PC-9 (cell line): ENCODE measurements at regions of chr3 and their contacts with region 1.

Region 1: GRCh38 chr3:126752303-126752842 is 48.3 kb downstream of the CHCHD6 start:
- DNase-seq: peak; percentile 44 to 88
- H3K4me3 ChIP-seq: no peak overlapping the region
- H3K27ac ChIP-seq: no peak overlapping the region
- H3K4me1 ChIP-seq: peaks cover 10% of the 10 kb centered on the region
- H3K27me3 ChIP-seq: no peaks in the 10 kb centered on the region
- CTCF ChIP-seq: peak; percentile 93

Region 2: GRCh38 chr3:126685041-126685440 is 67.3 kb before region 1 on chr3:
- CTCF ChIA-PET with region 1: no interaction called
- POLR2A ChIA-PET with region 1: no interaction called
- intact Hi-C with region 1: no loop called
- DNase-seq: no peak
- H3K4me3 ChIP-seq: no peak overlapping the region
- H3K27ac ChIP-seq: no peak overlapping the region
- H3K4me1 ChIP-seq: no peaks in the 10 kb centered on the region
- H3K27me3 ChIP-seq: no peaks in the 10 kb centered on the region
- CTCF ChIP-seq: no peak

Region 3: DNA sequence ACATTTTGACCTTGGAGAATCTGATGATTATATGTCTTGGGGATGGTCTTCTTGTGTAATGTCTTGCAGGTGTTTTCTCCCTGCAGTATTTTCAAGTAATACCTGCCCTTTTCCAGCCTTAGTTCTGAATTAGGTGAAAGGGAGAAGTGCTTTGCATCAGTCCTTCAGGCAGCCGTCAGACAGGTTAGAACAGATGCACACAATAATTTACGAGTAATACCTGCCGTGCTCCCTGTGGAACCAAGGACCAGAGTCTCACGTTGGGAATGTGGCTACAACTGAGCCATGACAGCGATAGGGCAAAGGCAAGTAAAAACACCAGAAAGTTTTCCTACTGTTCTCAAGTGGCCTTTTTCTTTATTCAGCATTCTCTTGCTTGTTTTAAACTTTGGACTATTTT is 20.8 kb after region 1 on chr3:
- CTCF ChIA-PET with region 1: interaction called, 17 read pairs
- POLR2A ChIA-PET with region 1: no interaction called
- intact Hi-C with region 1: no loop called
- DNase-seq: peak in 1 of 2 experiments; percentile 44
- H3K4me3 ChIP-seq: no peak overlapping the region
- H3K27ac ChIP-seq: peak overlapping the region; percentile 40
- H3K4me1 ChIP-seq: peaks cover 19% of the 10 kb centered on the region
- H3K27me3 ChIP-seq: no peaks in the 10 kb centered on the region
- CTCF ChIP-seq: no peak

Region 4: DNA sequence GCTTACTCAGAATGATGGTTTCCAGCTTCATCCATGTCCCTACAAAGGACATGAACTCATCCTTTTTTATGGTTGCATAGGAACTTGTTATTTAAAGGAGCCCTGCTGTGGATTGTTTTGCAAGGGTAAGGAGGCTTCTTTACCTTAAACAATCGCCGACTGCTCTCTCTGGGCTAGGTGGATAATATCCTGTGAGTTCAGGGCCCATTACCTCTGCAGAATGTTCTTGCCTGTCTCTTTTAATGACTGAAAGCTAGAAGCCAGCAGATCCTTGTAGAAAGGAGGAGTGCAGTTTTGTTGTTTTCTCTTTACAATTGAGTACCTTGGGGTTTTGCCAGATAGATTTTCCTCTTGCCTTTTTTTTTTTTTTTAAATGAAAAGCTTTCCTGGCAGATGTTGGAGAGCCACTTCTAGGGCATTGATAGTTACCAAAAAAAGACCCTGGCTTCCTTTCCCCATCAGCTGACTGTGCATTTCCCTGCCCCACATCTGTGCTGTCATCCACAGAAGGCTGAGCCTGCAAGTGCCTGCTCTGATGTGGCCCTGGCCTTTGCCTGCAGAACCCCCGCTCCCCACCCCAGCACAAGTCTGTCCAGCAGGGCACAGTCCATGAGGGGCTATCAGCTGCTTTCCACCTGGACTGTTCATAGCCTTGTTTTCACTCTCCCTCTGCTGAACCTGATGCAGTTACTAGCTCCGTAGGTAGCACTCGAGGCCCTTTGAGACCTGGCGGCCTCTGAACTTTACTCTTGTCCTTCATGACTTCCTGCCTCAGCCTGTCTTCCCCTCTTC is 64.8 kb after region 1 on chr3:
- CTCF ChIA-PET with region 1: no interaction called
- POLR2A ChIA-PET with region 1: no interaction called
- intact Hi-C with region 1: no loop called
- DNase-seq: no peak
- H3K4me3 ChIP-seq: no peak overlapping the region
- H3K27ac ChIP-seq: no peak overlapping the region
- H3K4me1 ChIP-seq: no peaks in the 10 kb centered on the region
- H3K27me3 ChIP-seq: no peaks in the 10 kb centered on the region
- CTCF ChIP-seq: no peak

Region 5: DNA sequence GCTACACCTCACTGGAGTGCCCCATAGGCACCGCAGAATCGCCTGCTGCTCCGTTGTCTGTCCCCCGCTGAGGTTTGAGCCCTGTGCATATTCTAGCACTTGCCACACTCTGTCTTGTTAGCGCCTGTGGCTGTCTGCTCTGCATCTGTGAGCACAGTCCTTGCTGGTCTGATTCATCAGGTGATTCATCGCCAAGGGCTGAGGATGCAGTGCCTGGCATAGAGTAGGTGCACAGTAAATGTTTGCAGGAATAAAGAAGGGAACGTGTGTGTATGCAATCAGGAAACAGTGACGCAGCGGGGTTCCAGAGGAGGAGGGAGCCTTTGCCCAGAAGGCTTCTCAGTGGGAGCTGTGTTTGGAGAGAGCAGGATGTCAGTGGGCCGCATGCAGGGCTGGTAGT is 106.5 kb after region 1 on chr3:
- CTCF ChIA-PET with region 1: no interaction called
- POLR2A ChIA-PET with region 1: no interaction called
- intact Hi-C with region 1: loop called (anchors 2 kb)
- DNase-seq: peak; percentile 69 to 94
- H3K4me3 ChIP-seq: no peak overlapping the region
- H3K27ac ChIP-seq: peak overlapping the region; percentile 66
- H3K4me1 ChIP-seq: peaks cover 30% of the 10 kb centered on the region
- H3K27me3 ChIP-seq: no peaks in the 10 kb centered on the region
- CTCF ChIP-seq: no peak

Region 6: DNA sequence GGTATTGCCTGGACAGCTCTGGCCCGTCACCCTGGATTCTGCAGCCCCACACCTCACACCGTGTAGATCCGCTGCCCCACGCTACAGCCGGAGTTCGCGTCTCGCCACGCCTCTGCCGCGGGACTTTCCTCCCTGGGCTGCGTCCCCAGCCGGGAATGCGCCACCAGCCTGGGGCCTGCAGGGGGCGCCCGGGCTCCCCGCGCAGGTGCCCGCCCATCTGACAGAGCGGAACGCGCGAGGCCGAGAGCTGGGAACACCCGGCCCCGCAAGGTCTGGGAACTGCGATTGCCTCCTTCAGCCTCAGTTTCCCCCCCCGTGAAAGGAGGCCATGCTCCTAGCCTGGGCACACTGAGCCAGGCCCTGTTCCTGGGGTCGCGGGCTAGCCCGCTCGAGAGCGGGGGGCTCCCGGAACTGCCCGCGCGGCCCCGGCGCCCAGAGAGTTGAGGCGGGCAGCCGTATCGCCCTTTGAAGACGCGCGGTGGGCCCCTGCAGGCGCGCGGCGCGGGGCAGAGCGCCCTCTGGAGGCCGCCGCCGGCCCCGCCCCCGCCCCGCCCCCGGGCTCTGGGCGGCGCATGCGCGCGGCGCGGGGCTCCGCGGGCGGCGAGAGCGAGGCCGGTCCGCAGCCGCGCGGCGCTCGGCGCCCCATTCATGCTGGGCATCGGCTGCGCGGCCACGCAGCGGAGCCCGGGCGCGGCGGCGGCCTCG is 230.2 kb after region 1 on chr3 and contains the start of gene PLXNA1:
- CTCF ChIA-PET with region 1: interaction called, 5 read pairs
- POLR2A ChIA-PET with region 1: interaction called, 5 read pairs
- intact Hi-C with region 1: loop called (anchors 1 kb)
- DNase-seq: peak in 1 of 2 experiments; percentile 82
- H3K4me3 ChIP-seq: peak within 1 kb of the TSS; percentile 86
- H3K27ac ChIP-seq: no peak within 1 kb of the TSS
- H3K4me1 ChIP-seq: peaks cover 20% of the 10 kb centered on the region
- H3K27me3 ChIP-seq: no peaks in the 10 kb centered on the region
- CTCF ChIP-seq: peak; percentile 93
- total RNA-seq, gene PLXNA1: 83.1 and 88.2 TPM in 2 replicates

Region 7: DNA sequence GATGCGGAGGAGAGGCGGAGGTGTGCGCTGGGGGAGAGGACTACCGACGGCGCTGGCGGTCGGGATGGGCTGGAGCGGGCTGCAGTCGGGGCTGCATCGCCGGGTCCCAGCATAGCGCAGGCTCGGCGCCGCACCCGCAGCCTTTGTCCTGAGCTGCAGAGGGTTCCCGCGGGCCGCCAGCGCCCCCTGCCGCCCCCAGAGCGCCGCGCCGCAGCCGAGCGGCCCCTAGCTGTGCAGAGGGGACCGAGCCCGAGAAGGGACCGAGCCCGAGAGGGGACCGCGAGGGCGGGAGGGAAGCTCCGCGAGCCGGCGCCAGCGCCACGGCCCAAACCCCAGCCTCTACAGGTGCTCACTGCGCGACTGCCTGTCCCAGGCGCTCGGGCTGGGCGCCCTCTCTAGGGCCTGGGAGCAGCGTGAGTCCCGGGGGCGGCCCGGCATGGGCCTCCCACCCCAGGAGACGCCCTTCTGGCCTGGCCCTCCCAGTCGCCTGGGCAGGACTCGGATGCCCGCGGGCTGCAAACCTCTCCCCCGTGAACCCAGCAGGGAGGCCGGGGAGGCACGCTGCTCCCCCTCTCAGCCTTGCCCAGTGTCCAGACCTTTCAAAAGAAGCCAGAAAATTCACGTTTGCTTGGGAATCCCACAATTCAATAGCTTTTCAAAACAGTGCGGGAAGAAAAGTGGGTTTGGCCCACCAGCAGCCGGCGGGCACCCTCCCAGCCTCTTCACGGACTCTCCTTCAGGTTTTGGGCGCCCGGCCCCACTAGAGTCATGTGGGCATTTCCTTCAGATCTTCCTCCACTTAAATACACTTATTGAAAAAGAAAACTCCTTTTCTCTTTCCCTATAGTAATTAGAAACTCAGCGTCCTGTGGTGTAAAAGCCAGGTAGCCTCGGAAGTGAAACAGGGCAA is 703.4 kb after region 1 on chr3:
- CTCF ChIA-PET with region 1: interaction called, 3 read pairs
- POLR2A ChIA-PET with region 1: no interaction called
- intact Hi-C with region 1: loop called (anchors 1 kb)
- DNase-seq: peak in 1 of 2 experiments; percentile 90
- H3K4me3 ChIP-seq: peak overlapping the region; percentile 39; the same call in 1 of the 2 replicates
- H3K27ac ChIP-seq: no peak overlapping the region
- H3K4me1 ChIP-seq: peaks cover 11% of the 10 kb centered on the region
- H3K27me3 ChIP-seq: peaks cover 60% of the 10 kb centered on the region
- CTCF ChIP-seq: peak; percentile 82